ENCODE measurements at regions of chr3 and their contacts with region 1.

Region 1: GRCh38 chr3:184636741-184637316 is 75.0 kb downstream of the MAGEF1 start:
- DNase-seq: peak in 6 of 14 experiments; percentile 2 to 44 (median 16)
- ATAC-seq: peak; percentile 54
- H3K4me3 ChIP-seq: no peak overlapping the region
- H3K4me3 Mint-ChIP-seq: peak overlapping the region; percentile 17
- H3K27ac ChIP-seq: no peak overlapping the region
- H3K27ac Mint-ChIP-seq: no peak overlapping the region
- H3K4me1 ChIP-seq: peaks cover 26% of the 10 kb centered on the region
- H3K4me1 Mint-ChIP-seq: peaks cover 7% of the 10 kb centered on the region
- H3K27me3 ChIP-seq: no peaks in the 10 kb centered on the region
- H3K27me3 Mint-ChIP-seq: no peaks in the 10 kb centered on the region
- CTCF ChIP-seq: no peak

Region 2: GRCh38 chr3:184611607-184612281 is 25.1 kb before region 1 on chr3:
- CTCF ChIA-PET with region 1: no interaction called
- POLR2A ChIA-PET with region 1: no interaction called
- intact Hi-C with region 1: no loop called
- DNase-seq: no peak
- ATAC-seq: no peak
- H3K4me3 ChIP-seq: no peak overlapping the region
- H3K4me3 Mint-ChIP-seq: no peak overlapping the region
- H3K27ac ChIP-seq: no peak overlapping the region
- H3K27ac Mint-ChIP-seq: no peak overlapping the region
- H3K4me1 ChIP-seq: peaks cover 12% of the 10 kb centered on the region
- H3K4me1 Mint-ChIP-seq: peaks cover 22% of the 10 kb centered on the region
- H3K27me3 ChIP-seq: no peaks in the 10 kb centered on the region
- H3K27me3 Mint-ChIP-seq: peaks cover 6% of the 10 kb centered on the region
- CTCF ChIP-seq: no peak

Region 3: DNA sequence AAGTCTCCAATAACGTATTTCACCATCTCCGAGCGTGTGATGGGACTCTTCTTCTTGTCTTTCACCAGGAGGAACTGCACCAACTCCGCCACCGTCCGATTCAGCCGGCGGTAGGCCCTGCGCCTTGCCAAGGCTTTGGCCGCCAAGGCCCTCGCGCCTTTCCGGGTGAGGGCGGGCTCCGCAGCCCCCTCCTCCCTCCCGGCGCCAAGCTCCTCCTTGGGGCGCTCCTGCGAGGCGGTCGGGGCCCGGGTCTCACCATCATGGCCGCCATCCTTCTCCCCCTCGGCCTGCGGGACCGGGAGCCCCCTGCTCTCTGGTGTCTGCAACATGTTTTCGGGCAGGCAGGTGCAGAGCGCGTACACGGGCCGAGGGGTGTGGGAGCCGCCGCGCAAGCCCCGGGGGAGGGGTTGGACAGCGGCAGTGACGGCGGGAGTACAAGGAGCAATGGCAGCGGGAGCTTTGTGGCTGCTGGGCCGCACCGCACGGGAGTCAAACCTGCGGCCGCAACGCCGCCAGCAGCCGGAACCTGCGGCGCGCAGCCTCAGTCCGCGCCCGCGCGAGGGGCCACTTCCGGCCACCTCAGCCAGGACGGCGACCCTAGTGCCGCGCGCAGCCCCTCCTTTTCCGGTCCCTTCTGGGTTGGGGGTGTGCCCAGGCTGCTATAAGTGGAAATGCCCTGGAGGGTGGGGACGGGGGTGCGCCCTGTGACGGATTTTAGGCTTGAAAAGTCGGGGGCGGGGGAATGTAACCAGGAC is 74.8 kb after region 1 on chr3 and contains the start of gene MAGEF1:
- CTCF ChIA-PET with region 1: no interaction called
- POLR2A ChIA-PET with region 1: interaction called, 12 read pairs
- intact Hi-C with region 1: no loop called
- DNase-seq: peak; percentile 37 to 86 (median 68)
- ATAC-seq: peak; percentile 78
- H3K4me3 ChIP-seq: peak within 1 kb of the TSS; percentile 87
- H3K4me3 Mint-ChIP-seq: peak within 1 kb of the TSS; percentile 93
- H3K27ac ChIP-seq: peak within 1 kb of the TSS; percentile 72 to 80
- H3K27ac Mint-ChIP-seq: peak within 1 kb of the TSS; percentile 77
- H3K4me1 ChIP-seq: peaks cover 25% of the 10 kb centered on the region
- H3K4me1 Mint-ChIP-seq: peaks cover 26% of the 10 kb centered on the region
- H3K27me3 ChIP-seq: no peaks in the 10 kb centered on the region
- H3K27me3 Mint-ChIP-seq: no peaks in the 10 kb centered on the region
- CTCF ChIP-seq: no peak
- total RNA-seq, gene MAGEF1: 5.8 to 6.1 TPM

Region 4: GRCh38 chr3:185508335-185508991 is 871.6 kb after region 1 on chr3:
- CTCF ChIA-PET with region 1: no interaction called
- POLR2A ChIA-PET with region 1: no interaction called
- intact Hi-C with region 1: no loop called
- DNase-seq: no peak
- ATAC-seq: no peak
- H3K4me3 ChIP-seq: no peak overlapping the region
- H3K4me3 Mint-ChIP-seq: no peak overlapping the region
- H3K27ac ChIP-seq: no peak overlapping the region
- H3K27ac Mint-ChIP-seq: no peak overlapping the region
- H3K4me1 ChIP-seq: no peaks in the 10 kb centered on the region
- H3K4me1 Mint-ChIP-seq: no peaks in the 10 kb centered on the region
- H3K27me3 ChIP-seq: no peaks in the 10 kb centered on the region
- H3K27me3 Mint-ChIP-seq: peaks cover 9% of the 10 kb centered on the region
- CTCF ChIP-seq: no peak